Testis (tissue), 5 donors: ENCODE measurements at regions of chr5 and their contacts with region 1.

Region 1: DNA sequence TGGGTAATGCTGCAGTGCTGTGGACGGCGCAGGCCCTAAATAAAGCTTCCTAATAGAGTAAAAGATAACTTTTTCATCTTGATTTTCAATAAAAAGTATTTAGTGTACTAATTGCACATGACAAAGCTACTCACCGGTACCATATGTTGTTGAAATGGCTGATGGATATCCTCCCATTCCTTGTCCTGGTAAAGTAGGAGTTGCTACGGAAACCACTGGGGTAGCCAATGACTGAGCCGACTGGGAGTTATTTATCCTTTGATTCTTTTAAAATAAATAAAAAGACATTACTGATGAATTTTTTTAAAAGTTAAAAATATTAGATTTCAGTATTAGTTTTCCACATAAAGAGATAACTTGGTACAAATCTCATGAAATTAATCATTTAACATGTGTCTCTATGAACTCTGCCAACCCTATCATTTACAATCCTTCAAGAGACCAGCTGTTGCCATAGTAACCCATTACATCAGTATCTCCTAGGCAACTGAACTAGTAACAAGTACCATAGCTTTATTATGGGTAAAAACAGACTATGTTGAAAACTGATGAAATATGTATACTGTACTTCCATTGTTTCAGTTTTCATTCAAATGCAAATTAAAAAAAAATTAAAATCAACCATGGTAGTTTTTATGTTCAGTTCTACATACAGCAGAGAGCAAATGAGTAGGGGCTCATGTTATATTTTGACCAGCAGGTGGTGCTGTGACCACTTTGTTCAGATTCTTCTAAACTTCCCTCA is 153.7 kb downstream of the MEF2C start:
- DNase-seq: peak; percentile 87
- H3K4me3 ChIP-seq: no peak overlapping the region
- H3K27ac ChIP-seq: no peak overlapping the region
- H3K4me1 ChIP-seq: peaks cover 8% of the 10 kb centered on the region
- H3K27me3 ChIP-seq: no peaks in the 10 kb centered on the region
- CTCF ChIP-seq: peak; percentile 83 to 86 (median 86)
- POLR2A ChIP-seq: no peak

Region 2: DNA sequence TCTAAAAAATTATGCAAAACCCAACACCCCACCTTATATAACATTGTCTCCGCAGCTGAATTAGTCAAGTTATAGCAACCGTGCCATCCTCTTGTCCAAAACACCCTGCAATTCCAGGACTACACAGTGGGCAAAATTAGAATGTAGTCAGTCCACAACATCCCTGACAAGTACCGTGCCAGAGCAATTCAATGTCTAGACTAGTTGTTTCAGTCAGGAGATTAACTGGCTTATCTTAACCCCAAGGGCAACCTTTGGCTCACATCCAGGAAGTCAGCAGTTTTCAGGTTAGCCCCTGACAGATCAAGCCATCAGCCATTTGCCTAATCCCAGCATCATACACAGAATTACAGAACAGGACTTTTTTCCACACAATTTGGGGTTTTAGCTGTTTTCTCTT is 219.9 kb before region 1 on chr5:
- intact Hi-C with region 1: no loop called
- DNase-seq: no peak
- H3K4me3 ChIP-seq: no peak overlapping the region
- H3K27ac ChIP-seq: no peak overlapping the region
- H3K4me1 ChIP-seq: no peaks in the 10 kb centered on the region
- H3K27me3 ChIP-seq: no peaks in the 10 kb centered on the region
- CTCF ChIP-seq: no peak
- POLR2A ChIP-seq: no peak

Region 3: DNA sequence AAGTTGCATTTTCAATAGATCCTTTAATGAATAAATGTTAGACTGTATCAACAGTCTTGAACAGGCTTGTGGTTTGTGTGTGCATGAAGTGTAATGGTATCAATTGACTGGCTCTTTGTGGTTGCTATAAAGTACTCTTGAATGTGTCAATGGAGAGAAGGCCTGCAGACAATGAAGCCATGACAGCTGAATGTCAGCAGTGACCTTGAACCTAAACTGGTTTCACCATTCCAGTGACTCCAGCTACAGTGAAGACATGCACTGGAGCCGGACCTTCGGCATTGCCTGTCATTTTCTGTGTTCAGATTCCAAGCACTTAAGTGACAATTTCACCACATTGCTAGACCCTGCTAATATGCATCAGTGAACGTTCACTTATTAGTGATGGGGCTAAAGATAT is 184.6 kb before region 1 on chr5:
- intact Hi-C with region 1: no loop called
- DNase-seq: no peak
- H3K4me3 ChIP-seq: no peak overlapping the region
- H3K27ac ChIP-seq: no peak overlapping the region
- H3K4me1 ChIP-seq: no peaks in the 10 kb centered on the region
- H3K27me3 ChIP-seq: no peaks in the 10 kb centered on the region
- CTCF ChIP-seq: no peak
- POLR2A ChIP-seq: no peak

Region 4: DNA sequence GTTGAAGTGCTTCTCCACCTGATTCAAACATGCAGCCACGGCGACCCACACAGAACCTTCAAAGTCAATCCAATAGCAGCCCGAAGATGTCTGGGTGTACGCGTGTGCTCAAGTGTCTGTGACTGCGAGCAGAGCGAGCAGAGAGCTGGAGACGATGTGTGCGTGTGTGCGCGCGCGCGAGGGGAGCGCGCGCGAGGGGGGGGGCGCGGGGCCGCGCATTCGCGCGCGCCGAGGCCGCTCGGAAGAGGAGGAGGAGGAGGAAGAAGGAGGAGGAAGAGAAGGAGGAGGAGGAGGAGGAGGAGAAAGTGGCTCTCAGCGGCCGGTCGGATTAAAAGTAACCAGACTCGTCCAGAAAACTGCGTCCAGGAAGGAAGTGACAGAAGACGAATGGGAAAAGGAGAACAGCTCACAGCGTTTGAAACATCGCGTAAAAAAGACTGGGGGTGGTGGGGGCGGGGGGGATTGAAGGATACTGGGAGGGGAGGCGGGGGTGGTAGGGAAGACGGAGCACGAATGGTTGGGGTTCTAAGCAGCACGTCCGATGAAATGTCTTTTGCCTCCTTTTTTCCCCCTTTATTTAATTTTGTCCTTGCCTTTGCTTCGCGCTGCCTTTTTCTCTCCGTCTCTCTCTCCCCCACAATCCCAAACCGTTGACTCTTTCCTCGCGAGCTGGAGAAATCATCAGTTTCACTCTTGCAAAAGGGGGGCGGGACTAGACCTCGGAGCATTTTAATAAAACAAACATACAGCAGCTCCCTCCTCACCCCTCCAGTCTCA is 154.0 kb after region 1 on chr5 and contains the start of gene MEF2C:
- intact Hi-C with region 1: loop called (anchors 10 kb)
- DNase-seq: peak; percentile 85
- H3K4me3 ChIP-seq: peak within 1 kb of the TSS; percentile 74 to 77
- H3K27ac ChIP-seq: peak within 1 kb of the TSS; percentile 90 to 93
- H3K4me1 ChIP-seq: no peaks in the 10 kb centered on the region
- H3K27me3 ChIP-seq: no peaks in the 10 kb centered on the region
- CTCF ChIP-seq: no peak
- POLR2A ChIP-seq: no peak
- total RNA-seq, gene MEF2C: 19.9 to 53.1 TPM

Region 5: DNA sequence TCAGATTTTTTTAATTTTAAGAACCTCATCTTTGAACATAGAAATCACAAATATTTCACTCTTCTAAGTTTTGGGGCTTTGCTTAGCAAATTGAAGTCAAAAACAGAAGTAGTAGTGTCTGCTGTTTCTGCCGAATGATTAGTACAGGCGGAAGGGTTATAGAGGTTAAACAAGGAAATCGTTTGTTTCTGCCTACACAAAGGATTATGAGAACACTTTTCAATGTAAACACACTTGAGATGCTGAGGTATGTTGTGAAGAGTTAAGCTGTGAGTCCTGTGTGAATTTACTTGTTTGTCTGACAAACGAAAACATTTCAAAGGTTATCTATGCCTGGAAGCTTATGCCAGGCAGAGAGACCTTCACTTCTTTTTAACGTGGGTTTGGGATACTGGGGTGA is 1455.5 kb after region 1 on chr5:
- intact Hi-C with region 1: loop called (anchors 10 kb)
- DNase-seq: no peak
- H3K4me3 ChIP-seq: no peak overlapping the region
- H3K27ac ChIP-seq: no peak overlapping the region
- H3K4me1 ChIP-seq: no peaks in the 10 kb centered on the region
- H3K27me3 ChIP-seq: no peaks in the 10 kb centered on the region
- CTCF ChIP-seq: no peak
- POLR2A ChIP-seq: no peak

Region 6: DNA sequence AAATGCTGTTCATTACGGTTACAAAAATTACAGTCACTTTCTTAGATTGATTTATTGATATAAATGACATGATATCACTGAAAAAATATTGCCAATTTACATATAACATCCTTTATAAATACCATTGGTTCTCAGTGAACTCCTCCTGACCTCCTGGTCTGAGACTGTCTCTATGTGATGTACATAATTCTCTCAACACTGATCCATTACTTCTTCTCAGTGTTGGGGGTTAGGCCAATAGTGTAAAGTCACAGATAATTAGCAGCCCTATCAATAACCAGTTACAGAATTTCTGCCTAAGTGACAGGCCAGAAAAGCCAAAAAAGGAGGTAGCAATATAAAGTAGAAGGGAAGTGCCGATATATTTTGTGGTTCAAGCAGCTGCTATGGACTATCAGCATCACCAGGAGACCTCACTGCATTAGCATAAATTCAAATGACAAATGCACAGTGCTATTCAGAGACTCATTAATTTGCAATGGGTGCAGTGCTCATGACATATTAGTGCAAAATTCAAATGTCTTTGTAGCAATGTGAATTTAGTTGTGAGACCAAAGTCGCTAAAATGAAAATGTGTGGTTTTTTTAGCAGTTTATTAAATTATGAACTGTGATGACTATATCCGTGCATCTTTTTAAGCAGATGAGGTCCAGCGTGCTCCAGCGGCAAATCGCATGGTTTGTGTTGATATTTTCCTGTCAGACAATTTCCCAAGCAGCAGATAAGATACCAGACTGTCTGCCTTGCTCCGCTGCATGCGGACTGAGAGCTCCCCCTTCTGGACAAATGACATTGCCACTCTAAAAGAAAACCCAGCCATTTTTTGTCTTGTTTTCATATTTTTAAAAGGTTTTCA is 1535.7 kb after region 1 on chr5:
- intact Hi-C with region 1: loop called (anchors 10 kb)
- DNase-seq: peak; percentile 74
- H3K4me3 ChIP-seq: no peak overlapping the region
- H3K27ac ChIP-seq: no peak overlapping the region
- H3K4me1 ChIP-seq: no peaks in the 10 kb centered on the region
- H3K27me3 ChIP-seq: no peaks in the 10 kb centered on the region
- CTCF ChIP-seq: peak; percentile 61 to 94 (median 67)
- POLR2A ChIP-seq: no peak